H1 (cell line): ENCODE measurements at regions of chr20 and their contacts with region 1.

Region 1: GRCh38 chr20:9570612-9571011 is 56.2 kb downstream of the LAMP5 start:
- DNase-seq: no peak
- H3K4me3 ChIP-seq: no peak overlapping the region
- H3K27ac ChIP-seq: no peak overlapping the region
- H3K4me1 ChIP-seq: peaks cover 13 to 35% (median 25%) of the 10 kb centered on the region in 4 experiments
- H3K27me3 ChIP-seq: peaks cover 0 to 30% (median 16%) of the 10 kb centered on the region in 4 experiments; a peak in 6 of 7 replicates
- CTCF ChIP-seq: no peak
- EP300 ChIP-seq: no peak
- POLR2A ChIP-seq: no peak
- RAD21 ChIP-seq: no peak

Region 2: GRCh38 chr20:9534025-9534424 is 36.6 kb before region 1 on chr20:
- CTCF ChIA-PET with region 1: interaction called, 15 read pairs
- POLR2A ChIA-PET with region 1: no interaction called
- DNase-seq: no peak
- H3K4me3 ChIP-seq: no peak overlapping the region
- H3K27ac ChIP-seq: no peak overlapping the region
- H3K4me1 ChIP-seq: peaks cover 0 to 3% (median 0%) of the 10 kb centered on the region in 4 experiments; a peak in 1 of 7 replicates
- H3K27me3 ChIP-seq: no peaks in the 10 kb centered on the region
- CTCF ChIP-seq: no peak
- EP300 ChIP-seq: no peak
- POLR2A ChIP-seq: no peak
- RAD21 ChIP-seq: no peak